SK-N-SH (cell line): ENCODE measurements at regions of chr1 and their contacts with region 1.

Region 1: DNA sequence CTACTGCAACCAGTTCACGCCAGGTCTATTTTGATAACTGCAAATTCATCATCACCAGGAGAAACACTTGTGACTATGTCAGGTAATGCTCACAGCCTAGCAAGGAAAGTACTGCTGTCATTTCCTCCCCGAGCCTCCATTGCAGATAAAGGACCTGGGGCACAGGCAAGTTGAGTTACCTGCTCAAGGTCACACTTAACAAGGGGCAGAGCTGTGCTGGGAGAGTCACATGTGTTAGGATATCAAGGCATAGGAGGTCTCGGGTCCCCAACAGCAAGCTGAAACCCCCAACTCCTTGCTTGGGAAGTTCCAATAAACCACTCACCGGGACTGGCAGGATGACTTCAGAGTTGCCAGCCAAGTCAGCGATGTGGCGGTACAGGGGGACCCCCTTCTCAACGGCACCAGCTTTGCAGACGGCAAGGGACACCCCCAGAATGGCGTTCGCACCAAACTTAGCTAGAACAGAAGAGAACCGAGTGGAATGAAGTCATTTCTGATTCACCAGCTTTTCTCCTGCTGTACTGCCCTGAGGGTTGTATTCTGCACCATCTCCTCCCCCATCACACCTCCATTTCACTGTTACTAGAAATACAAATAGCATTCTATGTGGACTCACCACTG is 11.6 kb downstream of the ENO1 start:
- DNase-seq: no peak
- H3K4me3 ChIP-seq: no peak overlapping the region
- H3K27ac ChIP-seq: peak overlapping the region in 1 of 2 experiments; percentile 50; a peak in 2 of 4 replicates
- H3K4me1 ChIP-seq: peaks cover 5 to 22% of the 10 kb centered on the region in 2 experiments; a peak in 3 of 4 replicates
- H3K27me3 ChIP-seq: no peaks in the 10 kb centered on the region
- CTCF ChIP-seq: no peak
- EP300 ChIP-seq: no peak
- RAD21 ChIP-seq: no peak

Region 2: GRCh38 chr1:8878448-8879347 is 11.8 kb after region 1 on chr1 and contains the start of gene ENO1:
- CTCF ChIA-PET with region 1: interaction called, 31 read pairs
- POLR2A ChIA-PET with region 1: interaction called, 18 read pairs
- DNase-seq: peak; percentile 100
- H3K4me3 ChIP-seq: peak within 1 kb of the TSS; percentile 78 to 89
- H3K27ac ChIP-seq: peak within 1 kb of the TSS; percentile 94 to 97
- H3K4me1 ChIP-seq: peaks cover 31 to 42% of the 10 kb centered on the region in 2 experiments
- H3K27me3 ChIP-seq: no peaks in the 10 kb centered on the region
- CTCF ChIP-seq: no peak
- EP300 ChIP-seq: no peak
- RAD21 ChIP-seq: no peak
- polyA plus RNA-seq, gene ENO1: 1,578 and 1,599 TPM in 2 replicates